Activated naive CD4-positive, alpha-beta T cell treated with anti-CD3 and anti-CD28 coated beads for 36 hours (primary cell): ENCODE measurements at regions of chr12 and their contacts with region 1.

Region 1: DNA sequence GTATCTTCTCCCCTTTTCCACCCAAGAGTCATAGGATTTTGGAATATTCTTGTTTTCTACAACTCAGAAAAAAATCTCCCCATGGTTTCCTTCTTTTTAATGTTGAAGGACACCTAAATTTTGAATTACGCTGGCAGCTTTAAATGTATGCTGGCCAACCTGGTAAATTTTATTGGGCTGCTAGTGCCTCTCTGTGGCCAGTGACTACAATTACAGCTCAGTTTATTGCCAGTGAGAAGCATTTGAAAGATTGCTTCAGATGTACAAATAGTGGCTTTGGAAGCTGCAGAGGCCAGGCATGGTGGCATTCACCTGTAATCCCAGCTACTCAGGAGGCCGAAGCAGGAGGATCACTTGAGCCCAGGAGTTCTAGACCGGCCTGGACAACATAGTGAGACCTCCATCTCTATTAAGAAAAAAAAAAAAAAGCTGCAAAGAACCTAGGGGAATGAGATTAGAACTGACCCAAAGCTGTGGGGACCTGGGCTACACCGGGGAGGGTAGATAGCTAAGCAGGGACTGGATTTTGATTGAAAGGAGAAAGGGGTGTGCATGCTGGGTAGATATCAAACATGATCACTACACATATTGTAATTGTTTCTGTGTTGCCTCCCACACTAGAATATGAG is 7.6 kb upstream of the RAB21 start:
- DNase-seq: peak; percentile 65
- H3K4me3 Mint-ChIP-seq: no peak overlapping the region
- H3K27ac Mint-ChIP-seq: no peak overlapping the region
- H3K4me1 Mint-ChIP-seq: no peaks in the 10 kb centered on the region
- H3K27me3 Mint-ChIP-seq: peaks cover 11% of the 10 kb centered on the region

Region 2: DNA sequence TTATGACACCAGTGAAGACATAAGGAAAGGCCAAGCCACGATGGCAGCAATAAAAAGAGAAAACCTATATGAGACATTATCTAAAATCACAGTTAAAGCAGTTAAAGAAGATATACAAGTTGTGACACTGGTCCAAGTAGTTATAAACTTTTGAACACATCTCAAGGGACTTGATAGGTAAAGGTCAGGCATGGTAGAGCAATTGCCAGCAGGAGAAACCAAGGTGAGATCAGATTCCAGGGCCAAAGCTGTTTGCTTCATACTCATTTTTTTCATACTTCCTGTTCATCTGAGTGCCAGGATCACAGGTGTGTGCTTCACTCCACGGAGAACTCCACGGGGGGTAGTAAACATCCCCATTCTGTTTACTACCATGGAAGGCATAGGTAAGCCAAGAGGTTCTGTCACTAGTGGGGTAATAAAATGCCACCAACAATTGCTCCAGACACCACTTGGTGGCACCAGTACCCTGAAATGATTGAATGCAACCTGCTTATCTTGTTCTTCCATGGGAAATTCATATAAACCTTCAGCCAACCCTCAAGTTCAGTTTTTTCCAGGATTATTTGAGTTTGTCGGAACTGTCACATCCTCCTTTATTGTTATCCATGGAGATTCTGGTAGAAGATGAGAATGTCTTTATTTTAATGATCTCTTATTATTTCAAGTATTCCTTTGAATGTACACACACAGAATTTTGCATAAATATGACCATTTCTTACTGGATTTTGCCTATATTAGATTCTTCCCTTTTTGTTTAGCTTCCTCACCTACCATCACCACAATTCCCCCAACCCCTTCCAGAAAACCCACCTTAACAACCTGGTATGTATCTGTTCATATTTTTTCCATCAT is 530.1 kb before region 1 on chr12:
- CTCF ChIA-PET with region 1: no interaction called
- intact Hi-C with region 1: loop called (anchors 1 kb)
- DNase-seq: peak; percentile 20
- H3K4me3 Mint-ChIP-seq: no peak overlapping the region
- H3K27ac Mint-ChIP-seq: no peak overlapping the region
- H3K4me1 Mint-ChIP-seq: no peaks in the 10 kb centered on the region
- H3K27me3 Mint-ChIP-seq: no peaks in the 10 kb centered on the region

Region 3: DNA sequence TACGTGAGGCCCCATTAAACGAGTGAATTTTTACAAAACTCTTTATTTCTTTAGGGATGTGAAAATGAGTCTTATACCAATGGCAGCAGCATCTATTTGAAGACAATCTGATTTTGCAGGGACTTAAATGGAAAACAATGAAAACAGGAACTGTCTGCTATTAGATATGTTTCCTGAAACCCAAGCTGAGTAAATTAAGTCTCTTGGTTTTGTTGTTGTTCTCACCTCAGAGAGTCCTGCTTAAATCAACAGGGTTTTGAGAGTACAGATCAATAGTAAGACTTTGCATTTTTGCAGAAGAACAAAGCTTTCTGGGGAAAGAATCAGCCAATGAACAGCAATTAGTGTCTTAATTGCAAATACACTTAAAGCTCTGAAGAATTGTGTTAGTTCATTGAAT is 346.6 kb before region 1 on chr12:
- CTCF ChIA-PET with region 1: interaction called, 10 read pairs
- intact Hi-C with region 1: no loop called
- DNase-seq: no peak
- H3K4me3 Mint-ChIP-seq: no peak overlapping the region
- H3K27ac Mint-ChIP-seq: no peak overlapping the region
- H3K4me1 Mint-ChIP-seq: no peaks in the 10 kb centered on the region
- H3K27me3 Mint-ChIP-seq: peaks cover 14% of the 10 kb centered on the region

Region 4: DNA sequence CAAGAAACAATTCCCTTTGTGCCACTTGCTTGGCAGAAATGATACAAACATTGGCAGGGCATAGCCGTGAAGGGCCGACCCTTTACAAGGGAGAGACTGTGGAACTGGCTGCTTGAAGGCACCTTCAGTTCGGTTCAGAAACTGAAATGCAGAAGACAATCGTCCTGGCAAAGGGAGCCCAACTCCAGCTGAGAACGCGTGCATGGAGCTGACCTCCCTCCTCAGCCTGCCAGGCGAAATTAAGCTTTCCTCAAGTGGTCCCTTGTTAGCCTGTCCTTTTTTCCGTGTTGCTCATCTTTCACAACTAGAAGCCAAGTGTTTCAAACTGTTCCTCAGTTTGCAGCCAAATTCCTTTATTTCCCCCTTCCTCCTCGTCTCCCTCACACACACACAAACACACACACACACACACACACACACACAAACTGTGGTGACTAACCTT is 299.4 kb before region 1 on chr12:
- CTCF ChIA-PET with region 1: no interaction called
- intact Hi-C with region 1: no loop called
- DNase-seq: no peak
- H3K4me3 Mint-ChIP-seq: no peak overlapping the region
- H3K27ac Mint-ChIP-seq: no peak overlapping the region
- H3K4me1 Mint-ChIP-seq: no peaks in the 10 kb centered on the region
- H3K27me3 Mint-ChIP-seq: peaks cover 36% of the 10 kb centered on the region

Region 5: DNA sequence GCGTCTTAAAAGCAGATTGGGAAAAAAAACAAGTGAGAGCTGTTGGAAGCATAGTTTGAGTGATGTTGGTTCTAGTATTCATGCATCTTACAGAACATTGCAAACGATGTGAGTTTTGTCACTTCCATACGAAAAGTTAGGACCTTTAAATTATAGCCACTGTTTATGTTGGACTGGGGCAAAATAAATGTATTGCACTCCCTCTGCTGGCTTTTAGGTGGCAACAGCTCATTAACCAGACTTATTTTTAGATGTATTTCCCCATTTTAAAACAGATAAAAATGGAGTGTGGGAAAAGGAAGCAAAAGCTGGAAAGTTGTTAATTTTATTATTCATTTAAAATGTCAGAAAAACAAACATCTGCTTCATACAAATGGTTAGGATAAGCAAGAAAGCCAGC is 195.6 kb before region 1 on chr12:
- CTCF ChIA-PET with region 1: interaction called, 9 read pairs
- intact Hi-C with region 1: loop called (anchors 1 kb)
- DNase-seq: no peak
- H3K4me3 Mint-ChIP-seq: no peak overlapping the region
- H3K27ac Mint-ChIP-seq: no peak overlapping the region
- H3K4me1 Mint-ChIP-seq: no peaks in the 10 kb centered on the region
- H3K27me3 Mint-ChIP-seq: no peaks in the 10 kb centered on the region

Region 6: DNA sequence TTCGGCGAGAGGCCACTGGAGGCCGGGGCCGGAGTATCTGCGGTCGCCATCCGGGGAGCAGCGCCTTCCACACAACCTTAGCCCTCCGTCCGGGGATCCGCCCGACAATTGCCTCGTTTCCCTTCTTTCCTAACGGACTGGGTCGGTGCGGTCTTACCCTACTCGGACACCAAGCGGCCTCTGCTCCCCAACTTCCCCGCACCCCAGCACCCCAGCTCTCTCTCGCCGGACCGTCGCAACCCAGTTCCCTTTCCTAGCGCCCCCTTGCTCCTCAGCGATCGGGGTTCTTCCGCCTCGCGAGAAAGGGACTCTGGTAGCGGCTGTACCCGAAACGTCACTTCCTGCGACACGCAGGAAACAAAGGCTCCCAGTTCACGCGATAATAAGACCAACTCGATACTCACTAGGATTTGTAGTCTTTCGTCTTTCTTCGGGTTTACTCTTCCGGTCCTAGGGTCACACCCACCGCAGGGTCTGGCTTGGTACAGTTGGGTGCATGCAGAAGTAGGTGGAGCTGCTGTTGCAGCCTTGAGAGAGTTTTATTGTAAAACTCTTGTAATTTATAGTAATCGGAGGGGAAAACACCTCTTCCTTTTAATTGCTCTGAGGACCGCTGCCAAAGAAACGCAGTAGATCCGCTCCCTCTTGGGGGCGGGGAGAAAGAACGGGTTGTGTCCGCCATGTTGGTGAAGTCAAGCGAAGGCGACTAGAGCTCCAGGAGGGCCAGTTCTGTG is 83.4 kb before region 1 on chr12 and contains the start of gene ZFC3H1:
- CTCF ChIA-PET with region 1: interaction called, 12 read pairs
- intact Hi-C with region 1: loop called (anchors 2 kb)
- DNase-seq: peak; percentile 95
- H3K4me3 Mint-ChIP-seq: peak within 1 kb of the TSS; percentile 97
- H3K27ac Mint-ChIP-seq: peak within 1 kb of the TSS; percentile 99
- H3K4me1 Mint-ChIP-seq: peaks cover 42% of the 10 kb centered on the region
- H3K27me3 Mint-ChIP-seq: no peaks in the 10 kb centered on the region
- total RNA-seq, gene ZFC3H1: 56.9 to 62.6 TPM